Activated CD4-positive, alpha-beta T cell treated with anti-CD3 and anti-CD28 coated beads for 36 hours (primary cell): ENCODE measurements at regions of chr21 and their contacts with region 1.

Region 1: GRCh38 chr21:15943009-15943666 is 213.4 kb downstream of the USP25 start:
- DNase-seq: no peak
- ATAC-seq: no peak
- H3K4me3 Mint-ChIP-seq: no peak overlapping the region
- H3K27ac Mint-ChIP-seq: no peak overlapping the region
- H3K4me1 Mint-ChIP-seq: no peaks in the 10 kb centered on the region
- H3K27me3 Mint-ChIP-seq: peaks cover 18% of the 10 kb centered on the region

Region 2: GRCh38 chr21:16117851-16118592 is 174.9 kb after region 1 on chr21:
- CTCF ChIA-PET with region 1: no interaction called
- POLR2A ChIA-PET with region 1: no interaction called
- intact Hi-C with region 1: no loop called
- DNase-seq: no peak
- ATAC-seq: no peak
- H3K4me3 Mint-ChIP-seq: no peak overlapping the region
- H3K27ac Mint-ChIP-seq: no peak overlapping the region
- H3K4me1 Mint-ChIP-seq: no peaks in the 10 kb centered on the region
- H3K27me3 Mint-ChIP-seq: no peaks in the 10 kb centered on the region

Region 3: GRCh38 chr21:16879479-16879878 is 936.3 kb after region 1 on chr21:
- CTCF ChIA-PET with region 1: no interaction called
- POLR2A ChIA-PET with region 1: interaction called, 14 read pairs
- intact Hi-C with region 1: no loop called
- DNase-seq: no peak
- ATAC-seq: no peak
- H3K4me3 Mint-ChIP-seq: no peak overlapping the region
- H3K27ac Mint-ChIP-seq: no peak overlapping the region
- H3K4me1 Mint-ChIP-seq: no peaks in the 10 kb centered on the region
- H3K27me3 Mint-ChIP-seq: no peaks in the 10 kb centered on the region